ENCODE measurements at regions of chr15 and their contacts with region 1.

Region 1: GRCh38 chr15:71730277-71731144 is 79.8 kb upstream of the NR2E3 start:
- DNase-seq: peak; percentile 49
- ATAC-seq: peak; percentile 77
- H3K4me3 Mint-ChIP-seq: no peak overlapping the region
- H3K27ac Mint-ChIP-seq: no peak overlapping the region
- H3K4me1 Mint-ChIP-seq: no peaks in the 10 kb centered on the region
- H3K27me3 Mint-ChIP-seq: peaks cover 11% of the 10 kb centered on the region

Region 2: DNA sequence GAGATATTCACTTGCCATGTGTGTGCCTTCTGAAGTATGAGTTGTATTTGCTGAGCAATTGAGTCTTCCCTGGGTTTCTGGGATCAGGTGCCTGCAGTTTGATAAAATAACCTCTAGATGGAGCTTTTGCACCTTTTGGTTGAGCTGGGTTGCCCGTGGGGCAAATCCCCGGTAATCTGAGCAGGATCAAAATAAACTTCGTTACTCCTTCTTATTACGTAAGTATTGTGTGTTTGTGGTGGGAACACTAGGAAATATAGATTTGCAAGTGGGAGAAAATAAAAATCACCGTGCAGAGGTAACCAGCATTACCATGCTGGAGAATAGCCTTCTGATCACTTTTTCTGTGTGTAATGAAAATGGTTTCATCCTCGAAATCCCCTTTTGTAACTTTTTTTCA is 197.5 kb before region 1 on chr15:
- CTCF ChIA-PET with region 1: interaction called, 3 read pairs
- POLR2A ChIA-PET with region 1: no interaction called
- intact Hi-C with region 1: loop called (anchors 1 to 10 kb)
- DNase-seq: peak; percentile 6
- ATAC-seq: no peak
- H3K4me3 Mint-ChIP-seq: no peak overlapping the region
- H3K27ac Mint-ChIP-seq: no peak overlapping the region
- H3K4me1 Mint-ChIP-seq: no peaks in the 10 kb centered on the region
- H3K27me3 Mint-ChIP-seq: peaks cover 24% of the 10 kb centered on the region

Region 3: GRCh38 chr15:71575474-71576045 is 155.0 kb before region 1 on chr15:
- CTCF ChIA-PET with region 1: interaction called, 4 read pairs
- POLR2A ChIA-PET with region 1: no interaction called
- intact Hi-C with region 1: loop called in 1 of 2 experiments (anchors 1 kb)
- DNase-seq: no peak
- ATAC-seq: no peak
- H3K4me3 Mint-ChIP-seq: no peak overlapping the region
- H3K27ac Mint-ChIP-seq: no peak overlapping the region
- H3K4me1 Mint-ChIP-seq: no peaks in the 10 kb centered on the region
- H3K27me3 Mint-ChIP-seq: peaks cover 25% of the 10 kb centered on the region

Region 4: DNA sequence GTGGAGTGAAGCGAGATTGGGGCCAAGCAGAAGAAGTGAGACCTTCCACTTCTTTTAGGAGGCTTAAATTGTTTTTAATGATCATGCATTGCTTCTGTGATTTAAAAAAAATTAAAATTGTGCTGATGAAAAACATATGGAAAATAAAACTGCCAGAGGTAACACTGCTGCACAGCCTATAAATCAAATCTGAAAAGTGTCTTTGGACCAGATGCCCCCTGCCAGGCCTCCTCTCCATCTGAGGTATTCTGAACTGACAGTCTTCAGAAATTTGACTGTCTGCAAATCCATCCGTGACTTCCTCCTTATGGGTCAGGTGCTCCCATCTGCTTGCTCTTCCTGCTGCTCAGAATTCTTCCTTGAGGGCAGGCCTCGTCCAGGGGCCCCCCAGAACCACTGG is 28.7 kb before region 1 on chr15:
- CTCF ChIA-PET with region 1: no interaction called
- POLR2A ChIA-PET with region 1: no interaction called
- intact Hi-C with region 1: no loop called
- DNase-seq: no peak
- ATAC-seq: no peak
- H3K4me3 Mint-ChIP-seq: no peak overlapping the region
- H3K27ac Mint-ChIP-seq: no peak overlapping the region
- H3K4me1 Mint-ChIP-seq: no peaks in the 10 kb centered on the region
- H3K27me3 Mint-ChIP-seq: peaks cover 22% of the 10 kb centered on the region

Measured in activated CD4-positive, alpha-beta T cell treated with anti-CD3 and anti-CD28 coated beads for 36 hours (primary cell).